Left lung (tissue), 14 donors: ENCODE measurements at regions of chr9 and their contacts with region 1.

Region 1: GRCh38 chr9:134455934-134456739 is 129.9 kb downstream of the RXRA start:
- DNase-seq: peak; percentile 87 to 94 (median 89)
- ATAC-seq: peak; percentile 82
- H3K4me3 ChIP-seq: peak overlapping the region; percentile 21 to 42
- H3K27ac ChIP-seq: peak overlapping the region; percentile 93 to 98
- H3K4me1 ChIP-seq: peaks cover 19 to 39% of the 10 kb centered on the region in 2 donors
- H3K27me3 ChIP-seq: no peaks in the 10 kb centered on the region
- CTCF ChIP-seq: peak in 1 of 2 donors; percentile 33

Region 2: DNA sequence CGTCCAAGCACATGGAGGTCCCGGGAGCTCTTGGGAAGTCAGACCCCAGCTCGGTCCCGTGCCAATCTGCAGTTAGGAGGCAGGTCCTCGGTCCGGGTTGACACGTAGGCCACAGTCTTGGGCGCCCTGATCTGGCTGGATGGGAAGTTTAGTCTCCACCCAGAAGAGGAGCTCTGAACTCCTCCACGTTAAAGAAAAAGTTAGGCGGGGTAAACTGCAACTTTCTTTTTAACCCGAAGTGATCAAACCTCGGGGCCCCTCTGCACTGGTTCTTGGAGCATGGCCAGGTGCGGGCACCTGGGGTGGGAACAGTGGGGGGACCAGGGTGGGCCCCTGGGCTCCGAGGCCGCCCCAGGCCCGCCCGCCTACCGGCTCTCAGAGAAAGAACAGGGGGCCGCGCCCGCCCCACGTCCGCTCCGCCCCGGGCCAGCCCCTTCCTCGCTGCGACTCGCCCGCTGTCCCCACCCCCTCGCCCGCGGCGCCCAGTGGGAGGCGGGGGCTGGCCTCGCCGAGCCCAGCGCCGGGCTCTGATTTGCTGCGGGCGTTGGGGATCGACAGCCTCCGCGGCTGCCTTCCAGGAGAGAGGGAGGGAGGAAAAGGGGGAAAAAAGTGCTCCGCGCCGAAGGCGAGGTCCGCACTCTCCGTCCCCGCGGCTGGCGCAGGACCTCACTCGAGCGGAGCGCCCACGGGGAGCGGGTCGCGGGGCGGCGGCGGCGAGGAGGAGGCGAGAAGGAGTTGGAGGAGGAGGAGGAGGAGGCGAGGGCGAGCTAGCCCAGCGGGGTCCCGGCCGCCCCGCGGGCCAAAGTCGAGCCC is 185.2 kb after region 1 on chr9 and contains the start of gene COL5A1:
- intact Hi-C with region 1: loop called in 1 of 2 experiments (anchors 10 kb)
- DNase-seq: peak; percentile 89 to 97 (median 92)
- ATAC-seq: peak; percentile 94
- H3K4me3 ChIP-seq: peak within 1 kb of the TSS; percentile 48 to 50
- H3K27ac ChIP-seq: peak within 1 kb of the TSS; percentile 74 to 85
- H3K4me1 ChIP-seq: peaks cover 1 to 20% of the 10 kb centered on the region in 2 donors
- H3K27me3 ChIP-seq: peaks cover 5 to 47% of the 10 kb centered on the region in 2 donors
- CTCF ChIP-seq: no peak
- polyA plus RNA-seq, gene COL5A1: 168 to 272 (median 209) TPM